ENCODE measurements at regions of chr17 and their contacts with region 1.

Region 1: DNA sequence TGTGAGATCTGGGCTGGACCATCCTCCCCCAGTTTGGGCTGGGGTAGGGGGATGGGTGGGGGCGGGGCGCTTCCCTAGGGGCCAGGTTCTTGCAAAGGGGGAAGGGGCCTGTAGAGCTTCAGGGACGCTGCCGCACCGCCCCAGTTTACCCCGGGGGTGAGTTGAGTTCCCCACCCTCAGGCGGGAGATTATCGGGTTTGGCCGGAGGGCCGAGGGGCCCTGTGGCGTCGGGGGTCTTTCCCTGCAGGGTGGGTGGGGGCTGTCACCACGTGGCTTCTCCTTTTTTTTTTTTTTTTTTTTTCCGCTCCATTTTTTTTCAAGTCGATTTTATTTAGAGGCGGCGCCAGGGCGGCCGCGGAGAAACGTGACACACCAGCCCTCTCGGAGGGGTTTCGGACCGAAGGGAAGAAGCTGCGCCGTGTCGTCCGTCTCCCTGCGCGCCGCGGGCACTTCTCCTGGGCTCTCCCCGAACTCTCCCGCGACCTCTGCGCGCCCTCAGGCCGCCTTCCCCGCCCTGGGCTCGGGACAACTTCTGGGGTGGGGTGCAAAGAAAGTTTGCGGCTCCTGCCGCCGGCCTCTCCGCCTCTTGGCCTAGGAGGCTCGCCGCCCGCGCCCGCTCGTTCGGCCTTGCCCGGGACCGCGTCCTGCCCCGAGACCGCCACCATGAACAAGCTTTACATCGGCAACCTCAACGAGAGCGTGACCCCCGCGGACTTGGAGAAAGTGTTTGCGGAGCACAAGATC is at the start of gene IGF2BP1:
- DNase-seq: peak in 1 of 2 experiments; percentile 34
- H3K4me3 ChIP-seq: peak within 1 kb of the TSS; percentile 96
- H3K27ac ChIP-seq: peak within 1 kb of the TSS; percentile 66
- H3K4me1 ChIP-seq: peaks cover 27% of the 10 kb centered on the region
- H3K27me3 ChIP-seq: no peaks in the 10 kb centered on the region
- CTCF ChIP-seq: no peak
- total RNA-seq, gene IGF2BP1: 56.5 and 57.4 TPM in 2 replicates

Region 2: DNA sequence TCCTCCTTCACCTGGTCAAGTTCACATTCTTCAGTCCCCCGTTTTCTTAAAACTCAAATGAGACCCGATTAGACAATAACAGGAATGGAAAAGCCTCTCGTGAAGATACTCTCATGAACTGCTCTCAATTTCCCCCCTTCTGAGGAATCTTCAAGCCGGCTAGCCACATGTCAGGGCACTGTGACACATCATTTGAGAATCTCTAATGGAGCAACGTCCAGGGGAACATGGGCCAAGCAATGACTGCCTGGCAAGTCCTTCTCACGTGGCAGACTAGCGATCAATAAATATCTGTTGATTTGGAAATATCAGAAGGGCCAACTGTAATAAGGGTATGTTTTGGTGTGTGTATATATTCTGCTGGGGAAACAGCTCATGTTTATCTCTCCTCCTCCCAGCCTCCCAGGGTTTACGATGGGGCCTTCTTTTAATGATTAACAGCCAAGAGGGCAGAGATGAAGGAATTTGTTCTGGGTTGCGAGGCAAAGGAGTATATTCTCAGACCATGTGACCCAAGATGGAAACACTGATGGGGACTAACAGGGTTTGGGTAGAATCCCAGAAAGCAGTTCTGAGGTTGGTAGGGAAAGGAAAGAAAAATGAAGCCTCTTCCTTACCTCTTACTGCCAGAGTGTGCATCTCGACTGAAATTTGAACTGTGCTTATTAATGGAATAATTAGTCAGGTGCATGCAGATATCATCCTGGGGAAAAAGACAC is 201.7 kb before region 1 on chr17:
- CTCF ChIA-PET with region 1: no interaction called
- POLR2A ChIA-PET with region 1: no interaction called
- intact Hi-C with region 1: no loop called
- DNase-seq: peak in 1 of 2 experiments; percentile 60
- H3K4me3 ChIP-seq: no peak overlapping the region
- H3K27ac ChIP-seq: no peak overlapping the region
- H3K4me1 ChIP-seq: no peaks in the 10 kb centered on the region
- H3K27me3 ChIP-seq: peaks cover 17% of the 10 kb centered on the region
- CTCF ChIP-seq: no peak

Region 3: GRCh38 chr17:48954300-48954755 is 42.9 kb before region 1 on chr17:
- CTCF ChIA-PET with region 1: interaction called, 3 read pairs
- POLR2A ChIA-PET with region 1: no interaction called
- intact Hi-C with region 1: loop called (anchors 5 kb)
- DNase-seq: peak; percentile 59 to 61
- H3K4me3 ChIP-seq: no peak overlapping the region
- H3K27ac ChIP-seq: no peak overlapping the region
- H3K4me1 ChIP-seq: peaks cover 5% of the 10 kb centered on the region
- H3K27me3 ChIP-seq: no peaks in the 10 kb centered on the region
- CTCF ChIP-seq: peak; percentile 84

Region 4: DNA sequence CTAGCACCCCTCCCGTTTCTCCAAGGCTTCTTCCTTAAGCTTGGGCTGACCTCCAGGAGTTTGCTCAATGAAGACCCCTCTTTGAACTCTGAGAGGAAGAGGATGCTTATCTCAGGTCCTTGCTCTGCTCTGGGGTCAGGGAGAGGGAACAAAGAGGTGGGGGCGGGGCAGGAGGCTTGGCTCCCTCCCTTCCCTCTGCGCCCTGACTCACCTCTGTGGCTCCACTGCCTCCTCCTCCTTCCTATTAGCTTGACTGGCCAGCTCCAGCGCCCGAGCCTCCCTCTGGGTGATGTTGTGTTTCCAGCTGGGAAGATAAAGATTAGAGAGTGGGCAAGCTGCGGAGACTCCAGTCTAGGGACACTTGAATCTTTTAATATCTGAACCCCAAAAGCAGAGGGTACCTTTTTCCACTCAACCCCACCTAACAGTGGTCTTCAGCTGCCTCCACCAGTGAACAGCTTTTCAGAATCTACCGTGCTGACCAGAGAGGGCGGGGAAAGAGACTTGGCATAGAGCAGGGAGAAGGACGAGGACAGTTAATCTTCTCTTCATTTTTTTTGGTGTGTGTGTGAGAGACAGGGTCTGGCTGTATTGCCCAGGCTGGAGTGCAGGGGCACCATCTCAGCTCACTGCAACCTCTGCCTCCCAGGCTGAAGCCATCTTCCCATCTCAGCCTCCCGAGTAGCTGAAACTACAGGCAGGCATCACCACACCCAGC is 35.6 kb before region 1 on chr17:
- CTCF ChIA-PET with region 1: interaction called, 14 read pairs
- POLR2A ChIA-PET with region 1: interaction called, 3 read pairs
- intact Hi-C with region 1: no loop called
- DNase-seq: peak; percentile 46 to 62
- H3K4me3 ChIP-seq: peak overlapping the region; percentile 16; the same call in 1 of the 2 replicates
- H3K27ac ChIP-seq: no peak overlapping the region
- H3K4me1 ChIP-seq: peaks cover 18% of the 10 kb centered on the region
- H3K27me3 ChIP-seq: no peaks in the 10 kb centered on the region
- CTCF ChIP-seq: no peak

Region 5: GRCh38 chr17:48970224-48970623 is 27.0 kb before region 1 on chr17:
- CTCF ChIA-PET with region 1: interaction called, 13 read pairs
- POLR2A ChIA-PET with region 1: interaction called, 4 read pairs
- intact Hi-C with region 1: no loop called
- DNase-seq: peak in 1 of 2 experiments; percentile 26
- H3K4me3 ChIP-seq: no peak overlapping the region
- H3K27ac ChIP-seq: no peak overlapping the region
- H3K4me1 ChIP-seq: peaks cover 27% of the 10 kb centered on the region
- H3K27me3 ChIP-seq: no peaks in the 10 kb centered on the region
- CTCF ChIP-seq: no peak

Measured in PC-9 (cell line).